Mucosa of descending colon (tissue), 3 donors: ENCODE measurements at regions of chr7 and their contacts with region 1.

Region 1: DNA sequence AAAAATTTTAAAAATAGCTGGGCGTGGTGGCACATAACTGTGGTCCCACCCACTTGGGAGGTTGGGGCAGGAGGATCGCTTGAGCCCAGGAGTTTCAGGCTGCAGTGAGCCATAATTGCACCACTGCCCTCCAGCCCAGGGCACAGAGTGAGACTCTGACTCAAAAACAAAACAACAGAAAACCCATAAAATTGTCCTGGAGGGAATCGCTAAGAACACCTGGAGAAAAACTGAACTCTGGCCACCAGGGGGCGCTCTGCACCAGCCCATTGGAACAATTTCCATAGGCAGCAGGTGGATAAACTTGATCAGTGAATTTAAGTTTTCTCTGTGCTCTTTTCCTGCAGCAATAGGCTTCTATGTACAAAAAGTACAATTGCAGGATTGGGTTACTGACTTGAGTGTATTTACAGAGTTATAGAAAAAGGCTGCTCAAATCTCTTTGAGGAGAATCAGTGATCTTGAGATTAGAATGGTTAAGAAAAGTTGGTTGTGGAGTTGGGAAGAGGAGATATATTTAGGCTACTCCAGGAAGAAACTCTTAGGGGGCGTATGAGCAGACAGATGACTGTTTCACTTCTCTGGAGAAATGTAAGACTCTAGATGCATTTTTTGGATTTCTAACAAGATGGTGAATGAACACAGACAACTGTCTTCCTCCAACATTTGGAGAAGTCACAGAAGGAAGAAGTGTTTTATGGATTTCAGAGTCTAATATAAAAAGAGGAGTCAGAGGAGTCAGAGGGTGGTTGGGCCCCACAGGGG is 274.9 kb upstream of the GALNT17 start:
- DNase-seq: peak; percentile 53 to 82 (median 74)
- ATAC-seq: peak; percentile 49
- H3K4me3 ChIP-seq: no peak overlapping the region
- H3K4me1 ChIP-seq: no peaks in the 10 kb centered on the region
- CTCF ChIP-seq: peak; percentile 39

Region 2: DNA sequence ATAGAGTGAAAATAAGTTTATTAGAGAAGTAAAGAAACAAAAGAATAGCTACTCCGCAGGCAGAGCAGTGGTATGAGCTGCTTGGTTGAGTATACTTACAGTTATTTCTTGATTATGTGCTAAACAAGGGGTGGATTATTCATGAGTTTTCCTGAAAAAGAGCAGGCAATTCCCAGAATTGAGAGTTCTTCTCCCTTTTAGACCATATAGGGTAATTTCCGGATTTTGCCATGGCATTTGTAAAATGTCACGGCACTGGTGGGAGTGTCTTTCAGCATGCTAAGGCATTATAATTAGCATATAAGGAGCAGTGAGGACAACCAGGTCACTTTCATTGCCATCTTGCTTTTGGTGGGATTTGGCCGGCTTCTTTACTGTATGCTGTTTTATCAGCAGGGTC is 249.2 kb after region 1 on chr7:
- intact Hi-C with region 1: no loop called
- DNase-seq: no peak
- ATAC-seq: no peak
- H3K4me3 ChIP-seq: no peak overlapping the region
- H3K4me1 ChIP-seq: no peaks in the 10 kb centered on the region
- CTCF ChIP-seq: no peak

Region 3: GRCh38 chr7:71733107-71733870 is 876.2 kb after region 1 on chr7:
- intact Hi-C with region 1: loop called (anchors 2 to 10 kb)
- DNase-seq: peak; percentile 71 to 87 (median 80)
- ATAC-seq: peak; percentile 84
- H3K4me3 ChIP-seq: no peak overlapping the region
- H3K4me1 ChIP-seq: no peaks in the 10 kb centered on the region
- CTCF ChIP-seq: peak; percentile 71